ENCODE measurements at regions of chr6 and their contacts with region 1.

Region 1: GRCh38 chr6:139927236-139927635 is 552.8 kb upstream of the CITED2 start:
- DNase-seq: no peak
- ATAC-seq: no peak
- H3K4me3 ChIP-seq: no peak overlapping the region
- H3K27ac ChIP-seq: peak overlapping the region; percentile 31; the same call in 1 of the 2 replicates
- H3K4me1 ChIP-seq: no peaks in the 10 kb centered on the region
- H3K27me3 ChIP-seq: no peaks in the 10 kb centered on the region
- CTCF ChIP-seq: peak; percentile 37; the same call in 1 of the 2 replicates

Region 2: GRCh38 chr6:140160909-140161308 is 233.7 kb after region 1 on chr6:
- CTCF ChIA-PET with region 1: no interaction called
- POLR2A ChIA-PET with region 1: interaction called, 11 read pairs
- in situ Hi-C with region 1: no loop called
- intact Hi-C with region 1: no loop called
- DNase-seq: no peak
- ATAC-seq: no peak
- H3K4me3 ChIP-seq: no peak overlapping the region
- H3K27ac ChIP-seq: no peak overlapping the region
- H3K4me1 ChIP-seq: no peaks in the 10 kb centered on the region
- H3K27me3 ChIP-seq: no peaks in the 10 kb centered on the region
- CTCF ChIP-seq: no peak

Region 3: DNA sequence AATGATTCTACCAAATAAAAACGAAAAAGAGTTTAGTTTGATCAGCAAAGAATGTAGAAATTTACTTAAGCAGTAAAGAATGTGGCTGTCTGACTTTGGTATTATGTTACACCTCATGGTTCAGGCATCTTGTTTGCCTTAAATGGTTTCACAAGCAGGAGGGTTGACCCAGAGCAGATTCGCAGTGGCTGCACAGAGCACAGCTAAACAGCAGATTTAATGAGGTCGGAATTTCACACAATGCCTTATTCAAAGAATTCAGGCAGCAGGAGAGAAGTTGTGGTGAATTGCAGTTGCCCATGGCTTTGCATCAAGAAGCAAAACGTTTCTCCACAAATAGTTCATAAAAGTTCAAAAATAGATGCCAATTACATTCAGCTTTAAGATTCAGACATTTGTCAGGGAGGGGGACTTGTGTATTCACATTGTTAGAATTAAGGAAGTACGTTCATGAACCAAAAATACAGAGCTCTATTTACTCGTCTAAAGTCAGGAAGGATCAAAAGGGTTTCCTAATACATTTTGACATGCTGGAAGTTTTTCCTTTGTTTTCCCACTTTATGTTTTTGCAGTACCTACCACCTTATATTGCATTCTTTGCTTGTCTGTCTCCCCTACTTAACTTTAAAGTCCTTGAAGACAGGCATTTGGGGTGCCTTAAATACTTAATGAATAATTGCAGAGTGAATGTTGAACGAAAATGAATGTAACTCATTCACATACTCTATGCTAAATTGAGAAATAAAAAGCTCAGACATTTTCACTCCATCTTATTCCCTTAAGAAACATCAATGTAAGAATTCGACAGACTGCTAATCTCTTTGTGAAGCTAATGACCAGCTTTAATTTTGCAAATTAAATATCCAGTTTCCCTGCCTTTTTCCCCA is 610.8 kb after region 1 on chr6:
- CTCF ChIA-PET with region 1: no interaction called
- POLR2A ChIA-PET with region 1: no interaction called
- in situ Hi-C with region 1: no loop called
- intact Hi-C with region 1: no loop called
- DNase-seq: peak; percentile 83
- ATAC-seq: peak; percentile 98
- H3K4me3 ChIP-seq: peak overlapping the region in 1 of 2 experiments; percentile 5; a peak in 2 of 4 replicates
- H3K27ac ChIP-seq: peak overlapping the region; percentile 94
- H3K4me1 ChIP-seq: peaks cover 24% of the 10 kb centered on the region; the same call in 1 of the 2 replicates
- H3K27me3 ChIP-seq: no peaks in the 10 kb centered on the region
- CTCF ChIP-seq: no peak